Heart left ventricle (tissue), 16 donors: ENCODE measurements at regions of chr11 and their contacts with region 1.

Region 1: DNA sequence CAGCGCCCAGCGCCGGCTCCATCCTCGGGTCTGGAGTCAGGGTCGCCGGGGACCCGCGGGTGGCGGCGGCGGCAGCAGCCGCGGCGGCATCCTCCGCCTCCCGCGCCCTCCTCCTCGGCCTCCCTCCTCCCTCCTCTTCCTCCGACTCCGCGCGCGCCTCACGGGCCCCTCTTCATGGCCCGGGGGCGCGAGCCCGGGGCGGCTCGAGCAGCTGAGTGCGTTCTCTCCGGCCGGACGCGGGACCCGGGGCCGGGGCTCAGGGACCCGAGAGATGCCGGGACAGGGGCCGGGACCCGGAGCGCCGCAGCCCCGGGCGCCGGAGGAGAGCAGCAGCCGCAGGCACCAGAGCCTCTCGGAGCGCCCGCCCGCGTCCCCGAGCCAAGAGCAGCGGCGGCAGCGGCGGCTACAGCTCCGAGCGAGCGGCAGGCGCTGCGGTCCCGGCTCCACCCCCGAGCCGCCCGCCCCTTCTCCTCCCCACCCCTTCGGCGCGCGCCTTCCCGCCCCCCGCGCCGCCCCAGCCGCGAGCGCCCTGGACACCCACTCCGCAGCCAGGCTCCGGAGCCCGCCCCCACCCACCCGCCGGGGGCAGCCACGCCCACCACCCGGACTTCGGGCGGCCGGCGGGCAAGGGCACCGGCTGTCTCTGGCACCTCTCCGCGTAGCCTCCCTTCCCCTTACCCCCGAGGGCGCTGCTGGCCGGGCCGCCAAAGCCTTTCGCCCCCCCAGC is at the start of gene CHST1:
- DNase-seq: peak; percentile 47 to 84 (median 61)
- ATAC-seq: peak in 3 of 4 donors; percentile 54 to 86 (median 77)
- H3K4me3 ChIP-seq: peak within 1 kb of the TSS; percentile 62 to 89 (median 78)
- H3K27ac ChIP-seq: peak within 1 kb of the TSS in 9 of 12 donors; percentile 27 to 69 (median 39)
- H3K4me1 ChIP-seq: peaks cover 0 to 35% (median 18%) of the 10 kb centered on the region in 12 donors
- H3K27me3 ChIP-seq: peaks cover 0 to 66% (median 5%) of the 10 kb centered on the region in 9 donors
- CTCF ChIP-seq: no peak
- POLR2A ChIP-seq: peak in 1 of 2 donors; percentile 57
- total RNA-seq, gene CHST1: 0.59 to 6.5 (median 1.8) TPM

Region 2: DNA sequence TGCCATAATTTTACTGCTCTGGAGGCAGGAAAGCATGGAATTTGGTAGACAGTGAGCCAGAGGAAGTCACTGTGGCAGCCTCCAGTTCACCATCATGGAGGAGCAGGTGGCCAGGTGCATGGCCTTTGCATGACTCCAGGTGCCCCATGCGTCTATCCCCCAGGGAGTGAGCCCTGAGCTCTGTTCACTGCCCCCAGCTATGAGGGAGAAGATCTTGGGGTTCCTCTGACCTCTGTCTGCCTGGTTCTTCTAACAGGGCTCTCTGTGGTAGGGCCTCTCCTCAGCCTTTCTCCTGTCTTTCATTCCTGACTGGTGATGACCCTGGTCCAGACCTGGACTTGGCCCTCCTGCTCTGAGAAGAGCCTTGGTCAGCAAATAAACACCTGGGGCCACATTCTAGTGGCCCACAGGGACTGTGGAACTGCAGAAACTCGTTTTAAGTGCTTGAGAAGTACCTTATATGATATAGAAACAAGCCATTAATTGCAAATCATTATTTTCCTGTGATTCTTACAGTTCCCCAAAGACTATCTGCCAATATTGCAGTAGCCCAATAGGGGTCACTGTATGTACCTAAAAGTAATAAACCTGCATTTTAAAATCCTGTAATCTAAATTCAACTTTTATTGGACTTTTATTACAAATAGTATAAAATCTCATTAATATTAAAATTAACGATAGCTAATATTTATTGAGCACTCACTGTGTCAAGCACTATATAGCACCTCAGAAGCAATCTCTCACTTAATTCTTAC is 259.3 kb before region 1 on chr11:
- intact Hi-C with region 1: loop called in 1 of 10 experiments (anchors 10 kb)
- DNase-seq: no peak
- ATAC-seq: no peak
- H3K4me3 ChIP-seq: no peak overlapping the region
- H3K27ac ChIP-seq: no peak overlapping the region
- H3K4me1 ChIP-seq: no peaks in the 10 kb centered on the region
- H3K27me3 ChIP-seq: peaks cover 0 to 17% (median 0%) of the 10 kb centered on the region in 9 donors
- CTCF ChIP-seq: peak; percentile 26 to 63 (median 50)
- POLR2A ChIP-seq: no peak

Region 3: DNA sequence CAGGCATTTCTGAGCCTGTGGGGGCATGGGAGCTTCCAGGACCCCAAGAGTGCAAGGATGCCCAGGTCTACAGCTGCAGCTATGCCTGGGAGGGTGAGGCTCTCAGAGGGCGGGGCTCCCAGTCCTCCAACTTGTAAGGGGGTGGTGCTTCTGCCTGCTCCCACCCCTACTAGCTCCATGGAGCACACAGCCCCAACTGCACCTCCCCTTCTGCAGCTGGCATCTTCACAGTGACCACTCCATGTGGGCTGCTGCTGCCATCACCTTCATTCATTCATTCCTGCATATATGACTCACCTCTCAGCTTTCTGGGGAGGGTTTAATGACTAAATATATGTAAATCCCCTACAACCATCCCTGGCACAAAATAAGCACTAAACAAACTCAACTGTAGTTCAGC is 43.8 kb before region 1 on chr11:
- intact Hi-C with region 1: no loop called
- DNase-seq: no peak
- ATAC-seq: no peak
- H3K4me3 ChIP-seq: no peak overlapping the region
- H3K27ac ChIP-seq: no peak overlapping the region
- H3K4me1 ChIP-seq: peaks cover 0 to 6% (median 0%) of the 10 kb centered on the region in 12 donors
- H3K27me3 ChIP-seq: peaks cover 0 to 5% (median 0%) of the 10 kb centered on the region in 9 donors
- CTCF ChIP-seq: no peak
- POLR2A ChIP-seq: no peak

Region 4: GRCh38 chr11:45724145-45724544 is 58.8 kb after region 1 on chr11:
- intact Hi-C with region 1: no loop called
- DNase-seq: no peak
- ATAC-seq: no peak
- H3K4me3 ChIP-seq: no peak overlapping the region
- H3K27ac ChIP-seq: no peak overlapping the region
- H3K4me1 ChIP-seq: peaks cover 0 to 12% (median 0%) of the 10 kb centered on the region in 12 donors
- H3K27me3 ChIP-seq: no peaks in the 10 kb centered on the region
- CTCF ChIP-seq: no peak
- POLR2A ChIP-seq: no peak

Region 5: GRCh38 chr11:45745065-45745811 is 79.9 kb after region 1 on chr11:
- intact Hi-C with region 1: loop called in 2 of 10 experiments (anchors 10 kb)
- DNase-seq: peak; percentile 72 to 82 (median 78)
- ATAC-seq: peak; percentile 68 to 92 (median 89)
- H3K4me3 ChIP-seq: no peak overlapping the region
- H3K27ac ChIP-seq: peak overlapping the region; percentile 12 to 78 (median 54)
- H3K4me1 ChIP-seq: peaks cover 0 to 26% (median 3%) of the 10 kb centered on the region in 12 donors
- H3K27me3 ChIP-seq: no peaks in the 10 kb centered on the region
- CTCF ChIP-seq: no peak
- POLR2A ChIP-seq: no peak

Region 6: GRCh38 chr11:45754261-45754709 is 88.9 kb after region 1 on chr11:
- intact Hi-C with region 1: loop called in 2 of 10 experiments (anchors 10 kb)
- DNase-seq: peak; percentile 39 to 84 (median 73)
- ATAC-seq: peak; percentile 89 to 96 (median 92)
- H3K4me3 ChIP-seq: no peak overlapping the region
- H3K27ac ChIP-seq: peak overlapping the region in 11 of 12 donors; percentile 6 to 53 (median 46)
- H3K4me1 ChIP-seq: peaks cover 0 to 24% (median 13%) of the 10 kb centered on the region in 12 donors
- H3K27me3 ChIP-seq: no peaks in the 10 kb centered on the region
- CTCF ChIP-seq: no peak
- POLR2A ChIP-seq: no peak

Region 7: GRCh38 chr11:46200537-46201281 is 535.3 kb after region 1 on chr11:
- intact Hi-C with region 1: no loop called
- DNase-seq: no peak
- ATAC-seq: no peak
- H3K4me3 ChIP-seq: no peak overlapping the region
- H3K27ac ChIP-seq: no peak overlapping the region
- H3K4me1 ChIP-seq: no peaks in the 10 kb centered on the region
- H3K27me3 ChIP-seq: peaks cover 0 to 14% (median 0%) of the 10 kb centered on the region in 9 donors
- CTCF ChIP-seq: no peak
- POLR2A ChIP-seq: no peak